HEK293 (cell line): ENCODE measurements at regions of chr10 and their contacts with region 1.

Region 1: GRCh38 chr10:70363971-70364771 is 18.3 kb downstream of the LRRC20 start:
- H3K4me3 ChIP-seq: no peak overlapping the region
- H3K27ac ChIP-seq: no peak overlapping the region
- H3K4me1 ChIP-seq: no peaks in the 10 kb centered on the region; the same call in 1 of the 2 replicates
- CTCF ChIP-seq: peak; percentile 96

Region 2: DNA sequence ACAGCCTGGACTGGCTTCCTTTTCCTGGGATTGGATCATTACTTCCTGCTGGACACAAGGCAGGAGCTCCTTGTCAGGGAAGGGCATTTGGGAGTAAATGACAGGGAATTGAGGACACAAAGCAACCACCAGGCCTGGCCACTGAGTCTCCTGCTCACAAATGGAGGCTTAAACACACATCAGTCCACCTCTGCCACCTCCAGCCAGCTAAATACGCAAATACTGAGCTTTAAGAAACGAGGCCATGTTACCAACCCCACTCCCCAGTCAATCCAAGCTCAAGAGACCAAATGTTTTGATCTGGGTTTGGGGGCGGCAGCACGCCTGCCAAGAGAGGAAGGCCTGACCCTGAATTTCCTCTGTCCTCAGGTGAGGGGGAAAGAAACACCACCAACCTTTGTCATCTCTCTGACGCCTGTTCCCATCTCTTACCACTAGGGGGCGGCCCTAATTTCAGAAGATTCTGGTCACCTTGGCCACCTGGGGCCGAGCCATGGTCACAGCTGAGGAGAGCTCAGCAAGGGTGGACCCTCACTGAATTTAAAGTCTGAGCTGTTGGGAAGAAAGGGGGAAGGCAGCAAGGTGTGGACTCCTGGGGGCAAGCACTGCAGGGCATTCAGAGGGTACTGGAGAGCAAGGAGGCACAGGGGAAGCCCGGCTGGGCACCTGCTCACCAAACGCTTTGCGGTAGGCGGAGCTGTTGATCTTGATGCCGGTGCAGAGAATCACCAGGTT is 248.1 kb before region 1 on chr10:
- CTCF ChIA-PET with region 1: interaction called, 11 read pairs
- POLR2A ChIA-PET with region 1: no interaction called
- H3K4me3 ChIP-seq: no peak overlapping the region
- H3K27ac ChIP-seq: no peak overlapping the region
- H3K4me1 ChIP-seq: no peaks in the 10 kb centered on the region; the same call in 1 of the 2 replicates
- CTCF ChIP-seq: peak; percentile 76

Region 3: DNA sequence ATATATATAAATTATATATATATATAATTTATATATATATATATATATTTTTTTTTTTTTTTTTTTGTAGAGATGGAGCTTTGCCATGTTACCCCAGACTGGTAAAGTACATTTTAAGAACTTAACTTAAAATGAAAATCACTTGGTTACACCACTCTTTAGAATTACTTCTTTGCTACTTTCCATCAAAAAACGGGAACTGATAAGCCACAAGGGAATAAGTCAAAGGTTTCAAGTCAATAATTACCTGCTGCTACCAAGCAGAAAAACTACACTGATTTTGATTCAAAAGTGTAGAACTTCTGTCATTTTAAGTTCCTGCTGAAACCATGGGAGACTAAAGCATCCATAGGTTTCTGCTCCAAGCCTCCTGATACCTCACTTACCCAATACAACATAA is 143.1 kb before region 1 on chr10:
- CTCF ChIA-PET with region 1: interaction called, 177 read pairs
- POLR2A ChIA-PET with region 1: interaction called, 3 read pairs
- H3K4me3 ChIP-seq: no peak overlapping the region
- H3K27ac ChIP-seq: no peak overlapping the region
- H3K4me1 ChIP-seq: no peaks in the 10 kb centered on the region
- CTCF ChIP-seq: no peak

Region 4: GRCh38 chr10:70267161-70267933 is 96.8 kb before region 1 on chr10:
- CTCF ChIA-PET with region 1: interaction called, 21 read pairs
- POLR2A ChIA-PET with region 1: no interaction called
- H3K4me3 ChIP-seq: no peak overlapping the region
- H3K27ac ChIP-seq: no peak overlapping the region
- H3K4me1 ChIP-seq: no peaks in the 10 kb centered on the region
- CTCF ChIP-seq: no peak

Region 5: DNA sequence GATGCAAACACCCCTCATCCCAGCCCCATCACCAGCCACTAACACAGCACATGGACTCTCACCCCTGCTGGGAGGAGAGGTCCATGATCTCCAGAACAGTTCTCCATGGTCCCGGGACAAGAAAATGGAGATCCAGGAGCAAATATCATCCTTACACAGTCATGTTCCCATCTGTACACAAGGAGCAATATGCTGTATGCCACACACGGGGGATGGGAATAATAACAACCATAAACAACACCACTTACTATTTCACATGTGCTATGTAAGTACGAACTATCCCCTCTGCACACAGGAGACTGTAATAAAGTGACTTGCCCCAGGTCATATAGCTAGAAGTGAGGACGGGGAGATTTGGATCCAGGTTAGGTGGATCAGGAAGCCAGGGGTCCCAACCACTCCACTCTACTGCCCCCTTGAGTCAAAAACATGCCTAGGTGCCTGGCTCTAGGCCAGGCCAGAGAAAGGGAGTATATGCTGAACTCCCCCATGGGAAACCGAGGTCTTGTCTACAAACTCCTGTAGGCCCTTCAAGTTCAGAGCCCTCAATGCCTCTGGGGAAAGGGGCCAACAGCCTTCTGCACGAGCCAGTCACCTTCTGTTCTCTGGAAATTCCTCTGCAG is 15.8 kb before region 1 on chr10:
- CTCF ChIA-PET with region 1: interaction called, 62 read pairs
- POLR2A ChIA-PET with region 1: no interaction called
- H3K4me3 ChIP-seq: no peak overlapping the region
- H3K27ac ChIP-seq: no peak overlapping the region
- H3K4me1 ChIP-seq: no peaks in the 10 kb centered on the region
- CTCF ChIP-seq: 0 out of 2 replicates have a peak, but pooled peaks have one; percentile 29

Region 6: DNA sequence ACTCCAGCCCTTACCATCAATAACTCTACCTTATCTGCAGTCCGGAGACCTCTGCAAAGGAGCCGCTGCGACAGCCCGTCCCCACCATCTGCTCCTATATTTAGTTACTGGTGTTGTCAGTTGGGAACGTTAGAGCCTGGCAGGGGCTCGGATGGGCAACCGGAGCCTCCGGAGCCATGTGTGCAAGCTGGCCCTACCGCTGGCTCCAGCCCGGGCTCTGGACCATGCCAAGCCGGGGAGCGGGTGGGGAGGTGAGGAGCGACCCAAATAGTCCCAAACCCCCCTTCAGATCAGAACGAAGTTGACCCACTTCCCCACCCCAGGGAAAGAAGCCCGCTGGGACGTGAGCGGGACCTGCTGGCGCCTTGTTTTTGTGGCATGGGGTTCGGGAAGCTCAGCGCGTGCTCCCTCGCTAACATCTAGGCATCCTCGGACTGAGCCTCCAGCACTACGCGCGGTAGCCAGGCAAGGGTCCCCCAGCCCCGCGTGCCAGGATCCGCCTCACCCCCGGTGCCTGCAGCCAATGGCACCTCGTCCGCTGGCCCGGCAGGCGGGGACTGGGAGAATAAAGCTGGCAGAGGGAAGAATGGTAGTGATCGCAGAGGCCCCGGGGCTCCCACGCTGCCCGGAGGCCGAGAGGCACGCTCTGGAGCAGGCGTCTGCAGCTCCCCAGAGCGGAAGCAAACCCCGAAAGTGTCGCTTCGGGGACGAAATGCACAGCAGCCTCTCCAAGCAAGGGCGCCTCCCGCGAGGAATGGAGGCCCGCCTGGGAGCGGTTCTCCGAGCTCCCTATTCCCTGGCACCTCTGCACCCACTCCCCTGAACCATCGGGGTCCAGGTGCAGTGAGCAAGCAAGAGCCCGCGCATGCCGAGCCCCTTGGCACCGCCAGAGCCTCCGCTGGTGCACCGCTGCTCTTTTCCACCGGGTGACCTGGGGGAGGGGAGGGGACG is 17.6 kb after region 1 on chr10:
- CTCF ChIA-PET with region 1: interaction called, 19 read pairs
- POLR2A ChIA-PET with region 1: interaction called, 7 read pairs
- H3K4me3 ChIP-seq: peak overlapping the region; percentile 57
- H3K27ac ChIP-seq: peak overlapping the region; percentile 46; the same call in 1 of the 2 replicates
- H3K4me1 ChIP-seq: peaks cover 3% of the 10 kb centered on the region; the same call in 1 of the 2 replicates
- CTCF ChIP-seq: no peak

Region 7: DNA sequence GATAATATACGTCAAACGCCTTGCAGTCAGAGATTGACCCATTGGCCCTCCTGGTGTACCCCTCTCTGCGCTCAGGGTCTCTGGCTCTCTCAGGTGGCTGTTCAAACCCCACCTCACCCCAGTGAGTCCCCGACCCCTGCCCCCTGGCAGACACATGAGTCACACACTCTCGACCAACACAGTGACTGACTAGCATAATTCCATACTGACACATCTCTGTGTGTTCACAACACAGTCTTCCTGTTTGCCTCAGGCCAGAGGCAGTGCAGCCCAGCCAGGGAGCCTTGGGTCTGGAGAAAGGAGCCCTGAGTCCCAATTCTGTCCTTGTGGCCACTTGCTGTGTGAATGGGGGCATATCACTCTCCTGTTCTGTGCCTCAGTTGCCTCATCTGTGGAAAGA is 154.5 kb after region 1 on chr10:
- CTCF ChIA-PET with region 1: no interaction called
- POLR2A ChIA-PET with region 1: no interaction called
- H3K4me3 ChIP-seq: no peak overlapping the region
- H3K27ac ChIP-seq: no peak overlapping the region
- H3K4me1 ChIP-seq: no peaks in the 10 kb centered on the region; the same call in 1 of the 2 replicates
- CTCF ChIP-seq: no peak